Gastrocnemius medialis (tissue), 4 donors: ENCODE measurements at regions of chr2 and their contacts with region 1.

Region 1: GRCh38 chr2:60095202-60095815 is 458.1 kb downstream of the BCL11A start:
- DNase-seq: no peak
- ATAC-seq: no peak
- H3K4me3 ChIP-seq: no peak overlapping the region
- H3K27ac ChIP-seq: no peak overlapping the region
- H3K4me1 ChIP-seq: peaks cover 18 to 42% of the 10 kb centered on the region in 2 donors
- H3K27me3 ChIP-seq: no peaks in the 10 kb centered on the region
- CTCF ChIP-seq: no peak
- POLR2A ChIP-seq: no peak

Region 2: DNA sequence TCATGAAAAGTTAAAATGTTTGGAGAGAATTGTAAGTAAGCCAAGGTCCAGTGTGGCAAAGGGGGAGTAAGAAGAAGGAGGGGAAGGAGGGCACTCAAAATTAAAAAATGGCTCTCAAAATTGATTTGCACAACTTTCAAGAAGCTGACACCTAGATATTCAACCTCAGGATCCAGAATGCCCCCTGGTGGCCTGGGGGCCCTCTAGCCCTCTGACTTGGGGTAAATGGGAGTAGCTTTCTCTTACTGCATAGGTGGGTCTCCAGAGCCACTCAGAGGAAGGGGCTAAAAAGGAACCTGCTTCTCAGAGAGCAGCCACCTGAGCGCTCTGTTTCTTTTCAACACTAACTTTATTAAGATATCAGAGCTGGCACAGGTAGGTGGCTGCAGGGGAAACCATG is 510.4 kb before region 1 on chr2:
- in situ Hi-C with region 1: no loop called
- intact Hi-C with region 1: no loop called
- DNase-seq: no peak
- ATAC-seq: no peak
- H3K4me3 ChIP-seq: no peak overlapping the region
- H3K27ac ChIP-seq: no peak overlapping the region
- H3K4me1 ChIP-seq: no peaks in the 10 kb centered on the region
- H3K27me3 ChIP-seq: no peaks in the 10 kb centered on the region
- CTCF ChIP-seq: no peak
- POLR2A ChIP-seq: no peak

Region 3: GRCh38 chr2:60058781-60059180 is 36.5 kb before region 1 on chr2:
- in situ Hi-C with region 1: no loop called
- intact Hi-C with region 1: loop called (anchors 5 kb)
- DNase-seq: no peak
- ATAC-seq: no peak
- H3K4me3 ChIP-seq: no peak overlapping the region
- H3K27ac ChIP-seq: no peak overlapping the region
- H3K4me1 ChIP-seq: peaks cover 0 to 7% of the 10 kb centered on the region in 2 donors
- H3K27me3 ChIP-seq: peaks cover 0 to 2% (median 0%) of the 10 kb centered on the region in 3 donors
- CTCF ChIP-seq: no peak
- POLR2A ChIP-seq: no peak

Region 4: GRCh38 chr2:60159519-60159918 is 64.2 kb after region 1 on chr2:
- in situ Hi-C with region 1: no loop called
- intact Hi-C with region 1: no loop called
- DNase-seq: no peak
- ATAC-seq: no peak
- H3K4me3 ChIP-seq: no peak overlapping the region
- H3K27ac ChIP-seq: no peak overlapping the region
- H3K4me1 ChIP-seq: no peaks in the 10 kb centered on the region
- H3K27me3 ChIP-seq: peaks cover 0 to 3% (median 0%) of the 10 kb centered on the region in 3 donors
- CTCF ChIP-seq: no peak
- POLR2A ChIP-seq: no peak

Region 5: GRCh38 chr2:60337140-60337494 is 241.8 kb after region 1 on chr2:
- in situ Hi-C with region 1: no loop called
- intact Hi-C with region 1: no loop called
- DNase-seq: no peak
- ATAC-seq: no peak
- H3K4me3 ChIP-seq: no peak overlapping the region
- H3K27ac ChIP-seq: no peak overlapping the region
- H3K4me1 ChIP-seq: no peaks in the 10 kb centered on the region
- H3K27me3 ChIP-seq: no peaks in the 10 kb centered on the region
- CTCF ChIP-seq: no peak
- POLR2A ChIP-seq: no peak